ENCODE measurements at regions of chr1 and their contacts with region 1.

Region 1: GRCh38 chr1:26602378-26602959 is 72.9 kb downstream of the RPS6KA1 start:
- DNase-seq: peak; percentile 52
- ATAC-seq: peak; percentile 71
- H3K4me3 Mint-ChIP-seq: no peak overlapping the region
- H3K27ac Mint-ChIP-seq: no peak overlapping the region
- H3K4me1 Mint-ChIP-seq: peaks cover 17% of the 10 kb centered on the region
- H3K27me3 Mint-ChIP-seq: no peaks in the 10 kb centered on the region
- CTCF ChIP-seq: peak; percentile 100

Region 2: DNA sequence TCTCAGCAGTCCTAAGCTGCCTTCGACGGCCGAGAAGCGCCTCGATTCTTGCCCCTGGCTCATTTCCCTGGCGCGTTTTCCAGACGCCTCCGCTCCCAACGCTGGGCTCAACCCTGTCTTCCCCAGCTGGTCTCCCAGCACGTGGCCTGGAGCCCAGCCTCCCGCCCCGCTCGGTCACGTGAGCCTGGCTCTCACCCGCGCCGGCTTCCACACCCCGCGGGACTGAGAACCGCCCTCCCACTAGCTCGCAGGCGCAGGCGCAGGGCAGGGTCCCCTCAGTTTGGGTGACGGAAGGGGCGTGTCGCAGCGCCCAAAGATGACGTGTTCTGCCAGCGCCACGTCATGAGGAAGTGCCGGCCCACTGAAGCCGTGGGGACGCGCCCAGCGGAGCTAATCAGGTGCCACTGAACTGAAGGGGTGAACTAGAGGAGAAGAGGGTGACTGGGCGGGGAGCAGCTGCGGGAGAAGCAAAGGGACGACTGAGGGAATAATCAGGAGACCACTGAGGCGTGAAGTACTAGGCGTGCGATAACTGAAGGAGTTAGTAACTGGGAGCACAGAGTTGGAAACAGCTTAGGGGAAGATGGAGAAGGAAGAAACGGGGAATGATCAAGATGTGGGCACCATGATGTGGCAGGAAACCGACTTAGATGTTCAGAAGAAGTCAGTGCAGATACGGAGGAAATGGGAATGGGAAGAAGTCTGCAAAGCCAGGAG is 170.3 kb before region 1 on chr1 and contains the start of gene DHDDS:
- CTCF ChIA-PET with region 1: no interaction called
- POLR2A ChIA-PET with region 1: no interaction called
- intact Hi-C with region 1: no loop called
- DNase-seq: peak; percentile 98
- ATAC-seq: peak; percentile 98
- H3K4me3 Mint-ChIP-seq: peak within 1 kb of the TSS; percentile 91
- H3K27ac Mint-ChIP-seq: peak within 1 kb of the TSS; percentile 88
- H3K4me1 Mint-ChIP-seq: peaks cover 19% of the 10 kb centered on the region
- H3K27me3 Mint-ChIP-seq: peaks cover 1% of the 10 kb centered on the region
- CTCF ChIP-seq: no peak
- total RNA-seq, gene DHDDS: 33.3 to 36.9 TPM

Region 3: GRCh38 chr1:26541816-26542711 is 60.4 kb before region 1 on chr1:
- CTCF ChIA-PET with region 1: interaction called, 11 read pairs
- POLR2A ChIA-PET with region 1: no interaction called
- intact Hi-C with region 1: no loop called
- DNase-seq: peak; percentile 96
- ATAC-seq: peak; percentile 78
- H3K4me3 Mint-ChIP-seq: peak overlapping the region; percentile 92
- H3K27ac Mint-ChIP-seq: peak overlapping the region; percentile 97
- H3K4me1 Mint-ChIP-seq: peaks cover 79% of the 10 kb centered on the region
- H3K27me3 Mint-ChIP-seq: no peaks in the 10 kb centered on the region
- CTCF ChIP-seq: peak; percentile 81

Region 4: DNA sequence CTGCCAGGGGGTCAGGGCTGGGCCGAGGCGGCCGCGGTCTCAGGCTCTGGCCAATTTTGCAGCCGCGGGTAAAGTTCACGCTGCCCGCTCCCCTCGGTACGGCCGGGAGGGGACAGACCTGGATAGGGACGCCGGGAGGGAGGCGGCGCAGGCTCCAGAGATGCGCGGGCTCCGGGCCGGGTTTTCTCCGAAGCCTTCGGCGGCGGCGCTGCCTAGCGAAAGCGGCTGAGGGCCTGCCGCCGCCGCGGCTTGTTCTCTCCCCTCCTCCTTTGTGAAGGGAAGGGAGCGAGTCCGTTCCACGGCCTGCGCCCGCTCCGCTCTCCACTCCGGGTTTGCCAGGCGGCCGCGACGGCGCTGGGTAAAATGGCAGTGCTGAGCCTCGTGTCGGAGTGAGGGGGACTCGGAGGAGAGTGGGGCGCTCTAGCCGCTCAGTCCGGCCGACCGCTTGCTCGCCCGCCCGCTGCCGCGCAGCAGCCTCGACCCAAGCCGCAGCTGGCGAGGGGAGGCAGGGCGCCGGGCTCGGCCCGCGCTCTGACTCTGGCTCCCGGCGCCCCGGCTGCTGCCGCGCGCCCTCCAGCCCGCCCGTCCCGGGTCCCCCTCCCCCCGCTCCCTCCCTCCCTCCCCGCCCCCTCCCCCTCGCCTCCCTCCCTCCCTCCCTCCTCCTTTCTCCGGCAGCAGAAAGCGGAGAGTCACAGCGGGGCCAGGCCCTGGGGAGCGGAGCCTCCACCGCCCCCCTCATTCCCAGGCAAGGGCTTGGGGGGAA is 93.1 kb after region 1 on chr1 and contains the start of gene ARID1A:
- CTCF ChIA-PET with region 1: interaction called, 36 read pairs
- POLR2A ChIA-PET with region 1: interaction called, 6 read pairs
- intact Hi-C with region 1: no loop called
- DNase-seq: peak; percentile 95
- ATAC-seq: peak; percentile 57
- H3K4me3 Mint-ChIP-seq: peak within 1 kb of the TSS; percentile 87
- H3K27ac Mint-ChIP-seq: peak within 1 kb of the TSS; percentile 98
- H3K4me1 Mint-ChIP-seq: peaks cover 22% of the 10 kb centered on the region
- H3K27me3 Mint-ChIP-seq: no peaks in the 10 kb centered on the region
- CTCF ChIP-seq: no peak
- total RNA-seq, gene ARID1A: 82.4 to 84.9 TPM

Region 5: DNA sequence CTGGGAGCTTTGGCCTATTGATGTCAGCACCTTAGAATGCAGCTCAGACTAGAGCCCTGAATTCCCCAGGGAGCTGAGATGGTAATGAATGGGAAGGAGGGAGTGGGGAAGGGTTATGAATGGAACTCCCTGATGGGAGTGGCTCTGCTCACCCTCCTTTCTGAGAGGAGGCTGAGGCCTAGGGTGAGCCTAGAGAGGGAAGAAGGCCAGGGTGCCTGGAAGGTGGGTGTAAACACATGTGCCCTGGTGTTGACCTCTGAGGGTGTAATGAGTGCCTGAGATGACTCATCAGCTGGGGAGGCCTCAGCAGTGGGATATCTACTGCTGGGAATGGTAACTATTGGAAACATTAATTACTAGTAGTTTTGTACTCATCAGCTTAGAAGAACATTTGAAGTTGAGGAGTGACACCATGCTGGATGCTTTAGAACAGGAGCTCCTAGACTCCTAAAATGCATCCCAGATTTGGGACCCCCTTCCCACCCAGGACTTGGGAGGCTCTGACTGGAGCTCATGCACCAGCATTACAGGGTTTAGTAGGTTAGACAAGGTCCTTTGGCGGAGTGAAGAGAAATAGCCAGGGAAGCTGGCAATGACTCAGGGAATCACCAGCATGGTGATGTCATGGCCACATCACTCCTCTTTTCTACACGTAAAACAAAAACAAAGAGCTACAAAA is 169.3 kb after region 1 on chr1:
- CTCF ChIA-PET with region 1: interaction called, 10 read pairs
- POLR2A ChIA-PET with region 1: no interaction called
- intact Hi-C with region 1: no loop called
- DNase-seq: peak; percentile 47
- ATAC-seq: peak; percentile 71
- H3K4me3 Mint-ChIP-seq: no peak overlapping the region
- H3K27ac Mint-ChIP-seq: peak overlapping the region; percentile 86
- H3K4me1 Mint-ChIP-seq: peaks cover 33% of the 10 kb centered on the region
- H3K27me3 Mint-ChIP-seq: no peaks in the 10 kb centered on the region
- CTCF ChIP-seq: no peak

Region 6: DNA sequence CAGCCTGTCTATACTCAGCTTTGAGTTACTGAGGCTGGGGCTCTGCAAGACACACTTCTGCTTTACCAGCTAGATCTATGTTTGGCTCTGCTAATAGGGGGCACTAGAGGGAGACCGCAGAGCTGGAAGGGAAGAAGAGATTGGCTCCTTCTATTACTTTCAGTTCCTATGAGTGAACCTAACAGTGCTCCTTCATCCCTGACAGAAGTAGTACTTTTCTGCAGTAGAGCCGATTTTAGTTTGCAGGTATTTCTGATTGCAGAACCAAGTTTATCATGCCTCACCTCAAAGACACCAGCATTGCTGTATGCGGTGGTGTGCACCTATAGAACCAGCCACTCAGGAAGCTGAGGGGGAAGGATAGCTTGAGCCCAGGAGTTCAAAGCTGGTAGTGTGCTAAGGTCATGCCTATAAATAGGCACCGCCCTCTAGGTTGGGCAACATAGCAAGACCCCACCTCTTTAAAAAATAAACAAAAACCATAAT is 218.4 kb after region 1 on chr1:
- CTCF ChIA-PET with region 1: interaction called, 10 read pairs
- POLR2A ChIA-PET with region 1: no interaction called
- intact Hi-C with region 1: no loop called
- DNase-seq: peak; percentile 49
- ATAC-seq: peak; percentile 86
- H3K4me3 Mint-ChIP-seq: peak overlapping the region; percentile 50
- H3K27ac Mint-ChIP-seq: peak overlapping the region; percentile 80
- H3K4me1 Mint-ChIP-seq: peaks cover 22% of the 10 kb centered on the region
- H3K27me3 Mint-ChIP-seq: no peaks in the 10 kb centered on the region
- CTCF ChIP-seq: peak; percentile 22

Region 7: DNA sequence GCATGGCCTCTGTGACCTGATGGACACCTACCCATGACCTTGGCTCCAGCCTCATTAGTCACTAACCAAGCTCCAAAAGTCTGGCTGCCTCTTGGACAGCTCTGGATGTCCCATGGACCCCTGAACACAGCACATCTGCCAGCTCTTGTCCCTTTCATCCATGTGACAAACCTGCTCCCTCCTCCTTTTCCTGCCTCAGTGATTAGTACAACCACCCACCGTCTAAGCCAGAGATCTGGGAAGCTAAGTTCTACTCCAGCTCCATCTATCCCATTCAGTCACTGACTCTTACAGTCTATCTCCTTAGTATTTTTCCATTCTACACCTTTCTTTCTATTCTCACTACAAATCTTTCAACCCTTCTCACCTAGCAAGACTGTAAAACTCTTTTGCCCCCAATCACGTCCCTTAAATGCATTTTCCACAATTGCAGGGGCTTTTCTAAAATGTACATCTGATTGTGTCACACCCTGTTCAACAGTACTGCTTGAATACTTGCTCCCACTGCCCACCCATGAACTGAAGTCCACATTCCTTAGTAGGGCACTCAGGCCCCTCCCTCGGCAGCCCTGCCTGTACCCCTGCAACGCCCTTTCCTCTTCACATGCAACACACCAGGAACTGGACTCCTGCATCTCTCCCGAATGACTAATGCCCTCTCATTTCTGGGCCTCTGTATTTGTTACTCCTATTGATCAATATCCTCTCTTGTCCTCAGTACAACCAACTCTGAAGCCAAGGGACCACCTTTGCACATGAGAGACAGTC is 280.4 kb after region 1 on chr1:
- CTCF ChIA-PET with region 1: interaction called, 19 read pairs
- POLR2A ChIA-PET with region 1: interaction called, 3 read pairs
- intact Hi-C with region 1: loop called (anchors 5 kb)
- DNase-seq: no peak
- ATAC-seq: no peak
- H3K4me3 Mint-ChIP-seq: no peak overlapping the region
- H3K27ac Mint-ChIP-seq: peak overlapping the region; percentile 7
- H3K4me1 Mint-ChIP-seq: peaks cover 3% of the 10 kb centered on the region
- H3K27me3 Mint-ChIP-seq: no peaks in the 10 kb centered on the region
- CTCF ChIP-seq: no peak

Measured in activated CD8-positive, alpha-beta T cell treated with anti-CD3 and anti-CD28 coated beads for 36 hours (primary cell).